Right lobe of liver (tissue), 6 donors: ENCODE measurements at regions of chrX and their contacts with region 1.

Region 1: GRCh38 chrX:102950908-102951866 is 14.1 kb downstream of the RAB40AL start:
- DNase-seq: peak in 1 of 3 donors; percentile 46
- ATAC-seq: peak; percentile 76 to 87 (median 82)
- H3K4me3 ChIP-seq: peak overlapping the region in 1 of 3 donors; percentile 9
- H3K27ac ChIP-seq: no peak overlapping the region
- H3K4me1 ChIP-seq: no peaks in the 10 kb centered on the region
- H3K27me3 ChIP-seq: no peaks in the 10 kb centered on the region
- CTCF ChIP-seq: peak; percentile 41 to 61 (median 56)
- POLR2A ChIP-seq: no peak

Region 2: GRCh38 chrX:103157496-103158320 is 206.5 kb after region 1 on chrX:
- intact Hi-C with region 1: loop called in 1 of 2 experiments (anchors 10 kb)
- DNase-seq: peak in 1 of 3 donors; percentile 40
- ATAC-seq: peak; percentile 81 to 90 (median 86)
- H3K4me3 ChIP-seq: no peak overlapping the region
- H3K27ac ChIP-seq: no peak overlapping the region
- H3K4me1 ChIP-seq: peaks cover 0 to 9% (median 0%) of the 10 kb centered on the region in 4 donors
- H3K27me3 ChIP-seq: no peaks in the 10 kb centered on the region
- CTCF ChIP-seq: peak; percentile 61 to 76 (median 70)
- POLR2A ChIP-seq: no peak